Panc1 (cell line): ENCODE measurements at regions of chr5 and their contacts with region 1.

Region 1: GRCh38 chr5:160508780-160509361 is 87.2 kb downstream of the PTTG1 start:
- DNase-seq: peak; percentile 84
- ATAC-seq: peak; percentile 90
- H3K4me3 ChIP-seq: no peak overlapping the region
- H3K27ac ChIP-seq: no peak overlapping the region
- H3K4me1 ChIP-seq: peaks cover 5% of the 10 kb centered on the region; the same call in 1 of the 2 replicates
- H3K27me3 ChIP-seq: no peaks in the 10 kb centered on the region
- CTCF ChIP-seq: peak; percentile 87

Region 2: GRCh38 chr5:160774666-160775315 is 265.9 kb after region 1 on chr5:
- CTCF ChIA-PET with region 1: no interaction called
- POLR2A ChIA-PET with region 1: no interaction called
- in situ Hi-C with region 1: no loop called
- intact Hi-C with region 1: loop called (anchors 10 kb)
- DNase-seq: no peak
- ATAC-seq: no peak
- H3K4me3 ChIP-seq: no peak overlapping the region
- H3K27ac ChIP-seq: no peak overlapping the region
- H3K4me1 ChIP-seq: no peaks in the 10 kb centered on the region
- H3K27me3 ChIP-seq: no peaks in the 10 kb centered on the region
- CTCF ChIP-seq: no peak

Region 3: GRCh38 chr5:160978944-160979343 is 470.1 kb after region 1 on chr5:
- CTCF ChIA-PET with region 1: no interaction called
- POLR2A ChIA-PET with region 1: no interaction called
- in situ Hi-C with region 1: no loop called
- intact Hi-C with region 1: no loop called
- DNase-seq: no peak
- ATAC-seq: no peak
- H3K4me3 ChIP-seq: no peak overlapping the region
- H3K27ac ChIP-seq: no peak overlapping the region
- H3K4me1 ChIP-seq: no peaks in the 10 kb centered on the region
- H3K27me3 ChIP-seq: no peaks in the 10 kb centered on the region
- CTCF ChIP-seq: no peak